Pancreas (tissue), 10 donors: ENCODE measurements at regions of chr4 and their contacts with region 1.

Region 1: GRCh38 chr4:147586637-147587036 is 30.6 kb upstream of the TMEM184C start:
- DNase-seq: no peak
- ATAC-seq: no peak
- H3K4me3 ChIP-seq: no peak overlapping the region
- H3K27ac ChIP-seq: no peak overlapping the region
- H3K4me1 ChIP-seq: no peaks in the 10 kb centered on the region
- H3K27me3 ChIP-seq: no peaks in the 10 kb centered on the region
- CTCF ChIP-seq: no peak

Region 2: GRCh38 chr4:147160908-147161513 is 425.6 kb before region 1 on chr4:
- intact Hi-C with region 1: loop called in 1 of 3 experiments (anchors 10 kb)
- DNase-seq: no peak
- ATAC-seq: peak in 3 of 4 donors; percentile 79 to 85 (median 82)
- H3K4me3 ChIP-seq: no peak overlapping the region
- H3K27ac ChIP-seq: no peak overlapping the region
- H3K4me1 ChIP-seq: no peaks in the 10 kb centered on the region
- H3K27me3 ChIP-seq: no peaks in the 10 kb centered on the region
- CTCF ChIP-seq: peak; percentile 31 to 61 (median 38)

Region 3: GRCh38 chr4:147173797-147174432 is 412.7 kb before region 1 on chr4:
- intact Hi-C with region 1: loop called in 2 of 3 experiments (anchors 10 kb)
- DNase-seq: no peak
- ATAC-seq: no peak
- H3K4me3 ChIP-seq: no peak overlapping the region
- H3K27ac ChIP-seq: no peak overlapping the region
- H3K4me1 ChIP-seq: no peaks in the 10 kb centered on the region
- H3K27me3 ChIP-seq: no peaks in the 10 kb centered on the region
- CTCF ChIP-seq: no peak

Region 4: DNA sequence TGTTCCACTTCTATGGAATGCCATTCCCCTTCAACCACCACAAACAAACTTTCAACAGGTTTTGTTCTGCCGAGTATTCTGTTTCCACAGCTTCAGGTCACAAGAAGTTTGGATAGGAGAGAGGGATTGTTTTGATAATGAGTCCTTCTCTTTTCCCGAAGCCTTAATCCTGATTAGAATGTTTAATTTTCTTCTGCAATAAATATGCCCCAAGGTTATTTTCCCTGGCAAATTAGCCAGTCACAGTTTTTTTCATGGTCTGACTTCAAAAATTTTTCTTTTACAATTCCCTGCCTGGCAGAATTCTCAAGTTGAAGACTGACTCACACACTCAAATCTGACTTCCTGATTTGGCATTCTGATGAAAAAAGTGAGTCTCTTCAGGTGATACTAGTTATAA is 138.9 kb before region 1 on chr4:
- intact Hi-C with region 1: no loop called
- DNase-seq: no peak
- ATAC-seq: peak in 1 of 4 donors; percentile 12
- H3K4me3 ChIP-seq: no peak overlapping the region
- H3K27ac ChIP-seq: no peak overlapping the region
- H3K4me1 ChIP-seq: no peaks in the 10 kb centered on the region
- H3K27me3 ChIP-seq: no peaks in the 10 kb centered on the region
- CTCF ChIP-seq: no peak

Region 5: GRCh38 chr4:147822128-147822527 is 235.5 kb after region 1 on chr4:
- intact Hi-C with region 1: no loop called
- DNase-seq: peak; percentile 82 to 94 (median 92)
- ATAC-seq: peak; percentile 68 to 84 (median 74)
- H3K4me3 ChIP-seq: no peak overlapping the region
- H3K27ac ChIP-seq: peak overlapping the region in 2 of 4 donors; percentile 50 to 62
- H3K4me1 ChIP-seq: peaks cover 20 to 32% (median 27%) of the 10 kb centered on the region in 3 donors
- H3K27me3 ChIP-seq: no peaks in the 10 kb centered on the region
- CTCF ChIP-seq: no peak